Motor neuron (in vitro differentiated cells): ENCODE measurements at regions of chr13 and their contacts with region 1.

Region 1: GRCh38 chr13:29513397-29514322 is 81.8 kb downstream of the SLC7A1 start:
- ATAC-seq: peak in 1 of 8 experiments; percentile 17
- H3K4me3 ChIP-seq: no peak overlapping the region
- H3K27ac ChIP-seq: no peak overlapping the region
- H3K4me1 ChIP-seq: peaks cover 15 to 19% of the 10 kb centered on the region in 2 donors

Region 2: GRCh38 chr13:29713839-29714238 is 200.2 kb after region 1 on chr13:
- in situ Hi-C with region 1: loop called in 3 of 9 experiments (anchors 10 to 25 kb)
- ATAC-seq: no peak
- H3K4me3 ChIP-seq: no peak overlapping the region
- H3K27ac ChIP-seq: no peak overlapping the region
- H3K4me1 ChIP-seq: peaks cover 18 to 22% of the 10 kb centered on the region in 2 donors